Left lung (tissue), 14 donors: ENCODE measurements at regions of chr3 and their contacts with region 1.

Region 1: DNA sequence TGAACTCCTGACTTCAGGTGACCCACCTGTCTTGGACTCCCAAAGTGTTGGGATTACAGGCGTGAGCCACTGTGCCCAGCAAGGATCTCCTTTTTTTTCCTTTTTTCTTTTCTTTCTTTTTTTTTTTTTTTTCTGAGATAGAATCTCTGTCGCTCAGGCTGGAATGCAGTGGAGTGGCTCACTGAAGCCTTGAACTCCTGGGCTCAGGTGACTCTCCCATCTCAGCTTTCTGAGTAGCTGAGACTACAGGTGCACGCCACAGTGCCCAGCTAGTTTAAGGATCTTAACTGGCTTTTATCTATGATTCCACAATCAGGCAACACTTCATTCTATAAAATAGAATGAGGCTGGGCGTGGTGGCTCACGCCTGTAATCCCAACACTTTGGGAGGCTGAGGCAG is 16.3 kb upstream of the NICN1 start:
- DNase-seq: no peak
- ATAC-seq: peak; percentile 9
- H3K4me3 ChIP-seq: no peak overlapping the region
- H3K27ac ChIP-seq: peak overlapping the region; percentile 13 to 70
- H3K4me1 ChIP-seq: peaks cover 0 to 38% of the 10 kb centered on the region in 2 donors
- H3K27me3 ChIP-seq: no peaks in the 10 kb centered on the region
- CTCF ChIP-seq: no peak

Region 2: GRCh38 chr3:49339945-49340800 is 105.2 kb before region 1 on chr3 and contains the start of gene USP4:
- intact Hi-C with region 1: loop called in 1 of 2 experiments (anchors 5 kb)
- DNase-seq: peak; percentile 77 to 99 (median 94)
- ATAC-seq: peak; percentile 95
- H3K4me3 ChIP-seq: peak within 1 kb of the TSS; percentile 84 to 92
- H3K27ac ChIP-seq: peak within 1 kb of the TSS; percentile 93 to 100
- H3K4me1 ChIP-seq: peaks cover 8 to 82% of the 10 kb centered on the region in 2 donors
- H3K27me3 ChIP-seq: no peaks in the 10 kb centered on the region
- CTCF ChIP-seq: peak in 1 of 2 donors; percentile 8
- polyA plus RNA-seq, gene USP4: 68.8 to 77.1 (median 73.6) TPM